ENCODE measurements at regions of chr13 and their contacts with region 1.

Region 1: DNA sequence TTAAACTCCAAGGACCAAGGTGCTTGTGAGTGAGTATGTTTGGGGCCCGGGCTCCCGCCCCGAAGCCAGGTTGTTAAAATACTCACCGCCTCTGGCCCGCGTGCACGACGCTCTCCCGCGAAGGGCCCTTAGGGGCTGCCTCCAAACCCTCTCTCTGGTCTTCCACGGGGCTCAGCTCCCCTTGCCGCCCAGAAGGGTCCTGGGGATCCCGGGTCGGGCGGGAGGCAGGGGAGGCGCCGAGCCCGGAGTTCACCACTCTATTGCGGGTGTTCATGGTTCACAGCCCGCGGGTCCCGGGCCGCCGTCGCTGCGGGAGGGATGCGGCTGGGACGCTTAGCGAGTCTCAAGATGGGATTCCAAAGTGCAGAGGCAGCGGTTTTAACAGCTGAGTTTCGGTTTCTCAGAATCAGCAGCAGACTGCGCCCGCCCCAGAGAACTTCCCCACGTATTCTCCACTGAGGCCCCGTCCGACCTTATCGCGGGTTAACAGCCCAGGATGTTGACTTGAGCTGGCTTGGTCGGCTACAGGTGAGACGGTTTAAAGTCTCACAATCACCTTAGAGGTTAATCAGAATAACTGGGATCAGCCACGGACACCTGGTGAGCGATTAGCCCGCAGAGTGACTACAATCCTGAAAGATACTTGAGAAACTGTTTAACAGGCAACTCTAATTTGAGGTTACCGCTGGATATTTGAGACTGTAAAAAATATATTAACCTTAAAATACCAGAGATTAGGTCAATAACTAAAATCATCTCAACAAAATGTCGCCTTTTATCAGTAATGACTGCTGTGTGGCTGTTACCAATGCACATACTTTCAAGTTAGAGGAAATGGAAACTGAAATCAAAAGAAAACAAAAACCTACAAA is at the start of gene EPSTI1:
- DNase-seq: peak; percentile 65 to 73
- ATAC-seq: peak; percentile 84 to 95 (median 92)
- H3K4me3 ChIP-seq: peak within 1 kb of the TSS; percentile 56 to 78 (median 73)
- H3K27ac ChIP-seq: peak within 1 kb of the TSS; percentile 57 to 93 (median 87)
- H3K4me1 ChIP-seq: peaks cover 0 to 44% (median 18%) of the 10 kb centered on the region in 9 donors
- H3K27me3 ChIP-seq: no peaks in the 10 kb centered on the region
- CTCF ChIP-seq: no peak
- total RNA-seq, gene EPSTI1: 2.4 to 31.3 (median 4.7) TPM

Region 2: DNA sequence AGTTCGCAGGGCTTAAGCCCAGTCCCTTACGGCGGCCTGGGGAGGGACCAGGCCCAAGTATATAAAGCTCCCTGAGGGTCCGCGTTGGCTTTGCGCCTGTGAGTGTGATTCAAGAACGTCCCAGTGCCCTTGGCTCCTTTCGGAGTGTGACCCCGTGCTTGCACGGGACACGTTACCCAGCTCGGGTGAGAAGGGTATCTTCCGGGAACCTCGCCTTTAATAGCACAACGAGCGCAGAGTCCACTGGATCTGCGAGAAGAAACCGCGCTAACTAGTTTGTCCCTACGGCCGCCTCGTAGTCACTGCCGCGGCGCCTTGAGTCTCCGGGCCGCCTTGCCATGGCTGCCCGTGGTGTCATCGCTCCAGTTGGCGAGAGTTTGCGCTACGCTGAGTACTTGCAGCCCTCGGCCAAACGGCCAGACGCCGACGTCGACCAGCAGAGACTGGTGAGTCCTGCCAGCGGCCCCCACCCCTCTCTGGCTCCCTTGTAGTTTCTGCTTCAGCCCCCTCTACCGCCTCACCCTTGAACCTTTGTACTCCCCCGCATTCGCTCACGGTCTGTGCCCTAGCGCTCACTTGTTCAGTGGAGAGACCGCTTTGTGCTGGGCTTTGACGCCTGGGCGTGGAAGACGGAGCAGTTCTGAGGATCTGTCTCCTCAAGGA is 31.3 kb after region 1 on chr13 and contains the start of gene DNAJC15:
- intact Hi-C with region 1: loop called in 1 of 10 experiments (anchors 2 kb)
- DNase-seq: peak; percentile 86 to 93
- ATAC-seq: peak; percentile 92 to 98 (median 95)
- H3K4me3 ChIP-seq: peak within 1 kb of the TSS; percentile 57 to 78 (median 70)
- H3K27ac ChIP-seq: peak within 1 kb of the TSS; percentile 53 to 95 (median 90)
- H3K4me1 ChIP-seq: peaks cover 0 to 43% (median 23%) of the 10 kb centered on the region in 9 donors
- H3K27me3 ChIP-seq: no peaks in the 10 kb centered on the region
- CTCF ChIP-seq: peak in 5 of 9 donors; percentile 6 to 46 (median 38)
- total RNA-seq, gene DNAJC15: 16.7 to 32.1 (median 28.1) TPM